ENCODE measurements at regions of chr15 and their contacts with region 1.

Region 1: GRCh38 chr15:99104788-99105513 is at the start of gene SYNM:
- DNase-seq: peak; percentile 83
- H3K4me3 ChIP-seq: peak within 1 kb of the TSS; percentile 38 to 44 (median 42)
- H3K27ac ChIP-seq: no peak within 1 kb of the TSS
- H3K4me1 ChIP-seq: peaks cover 7% of the 10 kb centered on the region
- H3K27me3 ChIP-seq: peaks cover 3% of the 10 kb centered on the region in 2 experiments
- CTCF ChIP-seq: peak; percentile 68 to 93
- POLR2A ChIP-seq: peak; percentile 77
- total RNA-seq, gene SYNM: 10.2 and 20.4 TPM in 2 replicates

Region 2: DNA sequence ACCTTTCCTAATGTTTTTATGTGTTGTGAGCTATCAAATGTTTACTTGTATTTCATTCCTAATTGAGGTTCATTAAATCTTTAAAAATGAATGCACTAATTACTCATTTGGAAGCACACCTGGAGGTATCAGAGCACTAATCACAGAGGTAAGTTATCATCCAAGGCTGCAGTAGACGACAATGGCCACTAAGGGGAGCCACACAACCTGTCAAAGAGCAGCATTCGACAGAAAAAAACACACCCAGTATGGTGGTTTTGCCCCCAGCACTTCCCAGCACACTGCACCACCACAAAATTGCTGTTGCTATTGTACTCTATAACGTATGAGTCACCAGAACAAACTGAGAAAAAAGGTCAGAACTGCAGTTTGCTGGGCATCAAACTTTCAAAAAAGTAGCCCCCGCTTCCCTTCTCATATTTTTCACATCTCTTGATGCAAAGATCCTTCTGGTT is 662.5 kb before region 1 on chr15:
- CTCF ChIA-PET with region 1: interaction called, 3 read pairs
- POLR2A ChIA-PET with region 1: no interaction called
- dilution Hi-C with region 1: no loop called
- intact Hi-C with region 1: loop called (anchors 1 kb)
- DNase-seq: peak; percentile 71
- H3K4me3 ChIP-seq: no peak overlapping the region
- H3K27ac ChIP-seq: no peak overlapping the region
- H3K4me1 ChIP-seq: no peaks in the 10 kb centered on the region
- H3K27me3 ChIP-seq: no peaks in the 10 kb centered on the region
- CTCF ChIP-seq: peak; percentile 72 to 80
- POLR2A ChIP-seq: no peak

Region 3: GRCh38 chr15:98581715-98582114 is 523.2 kb before region 1 on chr15:
- CTCF ChIA-PET with region 1: no interaction called
- POLR2A ChIA-PET with region 1: no interaction called
- dilution Hi-C with region 1: no loop called
- intact Hi-C with region 1: no loop called
- DNase-seq: no peak
- H3K4me3 ChIP-seq: no peak overlapping the region
- H3K27ac ChIP-seq: no peak overlapping the region
- H3K4me1 ChIP-seq: no peaks in the 10 kb centered on the region
- H3K27me3 ChIP-seq: peaks cover 3 to 19% of the 10 kb centered on the region in 2 experiments
- CTCF ChIP-seq: no peak
- POLR2A ChIP-seq: no peak

Region 4: DNA sequence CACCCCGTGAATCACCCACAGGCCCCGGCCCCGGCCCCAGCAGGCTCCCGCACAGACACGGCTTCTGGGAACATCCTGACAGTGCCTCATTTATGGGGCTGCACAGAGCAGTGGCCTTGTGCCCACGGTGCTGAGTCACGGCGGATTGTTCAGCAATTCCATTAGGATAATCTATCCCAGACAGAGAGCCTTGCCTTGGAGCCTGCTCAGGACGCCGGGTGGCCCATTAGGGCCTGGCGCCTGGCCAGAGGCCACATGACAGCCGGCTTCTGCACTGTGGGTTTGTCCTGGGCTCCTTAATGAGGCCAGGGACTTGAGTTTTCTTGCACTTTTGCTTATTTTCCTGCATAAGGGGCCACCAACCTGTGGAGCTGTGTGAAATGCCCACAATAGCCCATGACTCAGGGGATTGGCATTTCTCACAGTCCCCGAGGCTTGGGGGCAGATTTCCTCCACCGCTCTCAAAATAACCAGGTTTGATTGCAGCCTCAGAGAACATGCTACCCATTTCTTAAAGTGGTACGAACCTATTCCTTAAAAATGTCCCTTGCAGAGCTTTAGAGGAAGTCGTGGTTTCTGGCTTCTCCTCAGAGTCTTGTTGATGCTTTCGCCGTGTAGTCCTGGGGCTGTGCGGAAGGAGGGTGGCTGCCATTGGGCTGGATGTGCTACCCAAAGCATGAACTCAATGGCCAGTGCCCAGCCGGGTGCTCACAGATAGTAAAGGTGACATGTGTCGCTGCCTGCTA is 18.9 kb after region 1 on chr15:
- CTCF ChIA-PET with region 1: interaction called, 35 read pairs
- POLR2A ChIA-PET with region 1: interaction called, 4 read pairs
- dilution Hi-C with region 1: no loop called
- intact Hi-C with region 1: loop called (anchors 1 kb)
- DNase-seq: peak; percentile 95
- H3K4me3 ChIP-seq: no peak overlapping the region
- H3K27ac ChIP-seq: peak overlapping the region; percentile 88
- H3K4me1 ChIP-seq: peaks cover 30% of the 10 kb centered on the region
- H3K27me3 ChIP-seq: no peaks in the 10 kb centered on the region
- CTCF ChIP-seq: no peak
- POLR2A ChIP-seq: no peak

Region 5: GRCh38 chr15:99213187-99213811 is 108.3 kb after region 1 on chr15:
- CTCF ChIA-PET with region 1: interaction called, 226 read pairs
- POLR2A ChIA-PET with region 1: no interaction called
- dilution Hi-C with region 1: no loop called
- intact Hi-C with region 1: loop called (anchors 1 kb)
- DNase-seq: peak; percentile 77
- H3K4me3 ChIP-seq: no peak overlapping the region
- H3K27ac ChIP-seq: no peak overlapping the region
- H3K4me1 ChIP-seq: peaks cover 11% of the 10 kb centered on the region
- H3K27me3 ChIP-seq: no peaks in the 10 kb centered on the region
- CTCF ChIP-seq: peak; percentile 79 to 83
- POLR2A ChIP-seq: no peak

Region 6: DNA sequence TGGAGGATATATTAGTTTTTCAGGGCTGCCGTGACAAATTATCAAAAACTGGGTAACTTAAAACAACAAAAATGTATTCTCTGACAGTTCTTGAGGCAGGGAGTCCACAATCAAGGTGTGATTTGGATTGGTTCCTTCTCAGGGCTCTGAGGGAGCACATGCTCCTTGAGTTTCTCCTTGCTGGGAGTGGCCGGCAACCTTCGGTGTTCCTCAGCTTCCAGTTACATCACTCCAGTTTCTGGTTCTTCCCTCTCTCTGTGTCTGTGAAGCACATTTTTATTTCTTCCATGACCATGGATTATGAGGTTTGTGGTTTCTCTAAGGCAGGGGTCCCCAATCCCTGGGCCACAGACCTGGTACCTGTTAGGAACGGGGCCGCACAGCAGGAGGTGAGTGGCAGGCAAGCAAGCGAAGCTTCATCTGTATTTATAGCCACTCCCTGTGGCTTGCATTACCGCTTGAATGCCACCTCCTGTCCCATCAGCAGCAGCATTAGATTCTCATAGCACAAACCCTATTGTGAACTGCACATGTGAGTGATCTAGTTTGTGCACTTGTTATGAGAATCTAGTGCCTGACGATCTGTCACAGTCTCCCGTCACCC is 170.7 kb after region 1 on chr15:
- CTCF ChIA-PET with region 1: interaction called, 17 read pairs
- POLR2A ChIA-PET with region 1: no interaction called
- dilution Hi-C with region 1: no loop called
- intact Hi-C with region 1: no loop called
- DNase-seq: no peak
- H3K4me3 ChIP-seq: no peak overlapping the region
- H3K27ac ChIP-seq: no peak overlapping the region
- H3K4me1 ChIP-seq: no peaks in the 10 kb centered on the region
- H3K27me3 ChIP-seq: no peaks in the 10 kb centered on the region
- CTCF ChIP-seq: no peak
- POLR2A ChIP-seq: no peak

Region 7: GRCh38 chr15:99733268-99734039 is 628.5 kb after region 1 on chr15 and contains the start of gene LYSMD4:
- CTCF ChIA-PET with region 1: interaction called, 3 read pairs
- POLR2A ChIA-PET with region 1: no interaction called
- dilution Hi-C with region 1: no loop called
- intact Hi-C with region 1: loop called (anchors 2 kb)
- DNase-seq: peak; percentile 93
- H3K4me3 ChIP-seq: peak within 1 kb of the TSS; percentile 63 to 79 (median 71)
- H3K27ac ChIP-seq: peak within 1 kb of the TSS; percentile 21
- H3K4me1 ChIP-seq: peaks cover 5% of the 10 kb centered on the region
- H3K27me3 ChIP-seq: no peaks in the 10 kb centered on the region
- CTCF ChIP-seq: no peak
- POLR2A ChIP-seq: no peak
- total RNA-seq, gene LYSMD4: 7.0 and 8.4 TPM in 2 replicates